Activated CD8-positive, alpha-beta T cell treated with anti-CD3 and anti-CD28 coated beads for 36 hours (primary cell): ENCODE measurements at regions of chr4 and their contacts with region 1.

Region 1: GRCh38 chr4:82367438-82368097 is 6.2 kb downstream of the HNRNPD start:
- DNase-seq: no peak
- ATAC-seq: no peak
- H3K4me3 Mint-ChIP-seq: peak overlapping the region; percentile 31
- H3K27ac Mint-ChIP-seq: peak overlapping the region; percentile 56
- H3K4me1 Mint-ChIP-seq: peaks cover 68% of the 10 kb centered on the region
- H3K27me3 Mint-ChIP-seq: no peaks in the 10 kb centered on the region
- CTCF ChIP-seq: no peak

Region 2: GRCh38 chr4:82352913-82353366 is 14.6 kb before region 1 on chr4:
- CTCF ChIA-PET with region 1: interaction called, 15 read pairs
- POLR2A ChIA-PET with region 1: interaction called, 32 read pairs
- intact Hi-C with region 1: no loop called
- DNase-seq: no peak
- ATAC-seq: peak; percentile 61
- H3K4me3 Mint-ChIP-seq: no peak overlapping the region
- H3K27ac Mint-ChIP-seq: peak overlapping the region; percentile 85
- H3K4me1 Mint-ChIP-seq: peaks cover 60% of the 10 kb centered on the region
- H3K27me3 Mint-ChIP-seq: no peaks in the 10 kb centered on the region
- CTCF ChIP-seq: no peak

Region 3: DNA sequence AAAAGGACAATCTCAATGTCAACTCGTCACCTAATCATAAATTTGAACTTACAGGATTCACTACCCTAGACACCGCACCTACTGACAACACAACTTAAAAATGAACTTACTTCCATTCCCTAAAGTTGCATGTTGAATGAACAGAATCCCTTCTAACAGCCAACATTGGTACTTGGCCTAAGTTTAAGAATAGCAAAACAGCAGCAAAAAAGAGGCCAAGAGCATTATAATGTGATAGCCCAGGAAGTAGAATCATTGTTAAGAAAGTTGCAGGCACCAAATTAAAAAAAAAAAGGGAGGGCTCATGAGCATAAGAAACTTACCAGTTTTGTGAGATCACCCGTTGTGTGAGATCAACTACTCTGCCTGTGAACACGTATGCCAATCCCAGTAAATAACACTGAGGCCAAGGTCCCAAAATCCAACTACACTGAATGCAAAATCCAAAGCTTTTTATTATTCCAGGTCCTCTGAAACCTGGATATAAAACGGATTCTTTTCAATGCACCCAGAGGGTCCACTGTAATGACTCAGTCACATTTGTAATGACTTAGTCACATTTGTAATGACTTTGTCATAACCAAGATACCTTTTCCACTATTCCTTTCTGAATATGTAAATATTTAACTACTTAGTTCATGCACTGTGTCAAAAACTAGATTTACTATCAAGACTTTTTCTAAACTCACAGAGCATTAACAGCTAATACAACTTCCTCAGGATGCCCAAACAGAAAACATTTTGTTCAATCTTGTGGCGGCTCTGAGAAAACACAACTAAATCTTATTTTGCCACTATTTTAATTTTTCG is 55.9 kb after region 1 on chr4:
- CTCF ChIA-PET with region 1: interaction called, 5 read pairs
- POLR2A ChIA-PET with region 1: interaction called, 193 read pairs
- intact Hi-C with region 1: no loop called
- DNase-seq: no peak
- ATAC-seq: peak; percentile 46
- H3K4me3 Mint-ChIP-seq: no peak overlapping the region
- H3K27ac Mint-ChIP-seq: peak overlapping the region; percentile 52
- H3K4me1 Mint-ChIP-seq: peaks cover 44% of the 10 kb centered on the region
- H3K27me3 Mint-ChIP-seq: no peaks in the 10 kb centered on the region
- CTCF ChIP-seq: no peak